CD4-positive, alpha-beta memory T cell (primary cell): ENCODE measurements at regions of chr19 and their contacts with region 1.

Region 1: GRCh38 chr19:1189419-1189818 is 15.4 kb upstream of the SBNO2 start:
- DNase-seq: peak in 2 of 5 donors; percentile 36 to 68
- H3K4me3 ChIP-seq: no peak overlapping the region
- H3K4me3 Mint-ChIP-seq: peak overlapping the region in 6 of 8 donors; percentile 39 to 73 (median 50)
- H3K27ac ChIP-seq: no peak overlapping the region
- H3K27ac Mint-ChIP-seq: peak overlapping the region in 6 of 7 donors; percentile 30 to 92 (median 79)
- H3K4me1 ChIP-seq: peaks cover 39% of the 10 kb centered on the region
- H3K4me1 Mint-ChIP-seq: peaks cover 13 to 30% (median 18%) of the 10 kb centered on the region in 4 donors
- H3K27me3 ChIP-seq: no peaks in the 10 kb centered on the region
- H3K27me3 Mint-ChIP-seq: no peaks in the 10 kb centered on the region

Region 2: DNA sequence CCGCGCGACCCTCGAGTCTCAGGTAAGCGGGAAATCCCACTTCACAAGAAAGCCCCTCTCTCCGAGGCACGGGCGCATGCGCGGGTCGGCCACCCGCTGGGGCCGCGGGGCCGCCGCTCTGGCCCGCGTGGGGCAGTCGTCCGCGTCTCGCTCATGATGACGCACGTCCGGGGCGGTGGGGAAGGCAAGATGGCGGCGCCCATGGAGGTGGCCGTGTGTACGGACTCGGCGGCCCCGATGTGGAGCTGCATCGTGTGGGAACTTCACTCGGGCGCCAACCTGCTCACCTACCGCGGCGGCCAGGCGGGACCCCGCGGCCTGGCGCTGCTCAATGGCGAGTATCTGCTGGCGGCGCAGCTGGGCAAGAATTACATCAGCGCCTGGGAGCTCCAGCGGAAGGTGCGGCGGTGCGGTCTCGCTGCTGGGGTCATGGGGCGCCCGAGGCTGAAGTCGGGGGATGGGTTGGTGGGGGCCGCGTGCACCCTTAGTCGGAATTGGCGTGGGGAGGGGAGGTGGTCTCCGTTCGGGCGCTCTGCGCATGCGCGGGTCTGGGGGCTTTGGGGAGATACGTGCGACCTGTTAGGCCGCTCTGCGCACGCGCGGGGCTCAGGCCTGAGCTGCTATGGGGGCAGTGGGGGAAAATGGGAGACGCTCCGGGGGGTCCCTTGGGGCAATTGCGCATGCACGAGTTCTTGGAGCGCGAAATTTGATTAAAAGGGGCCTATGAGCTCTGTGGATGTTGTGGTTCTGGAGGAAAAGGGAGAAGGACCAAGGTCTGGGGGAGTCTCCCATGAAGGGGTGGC is 205.1 kb before region 1 on chr19 and contains the start of gene WDR18:
- CTCF ChIA-PET with region 1: interaction called, 13 read pairs
- POLR2A ChIA-PET with region 1: interaction called, 6 read pairs
- intact Hi-C with region 1: no loop called
- DNase-seq: peak; percentile 79 to 87 (median 81)
- H3K4me3 ChIP-seq: peak within 1 kb of the TSS; percentile 65 to 69
- H3K4me3 Mint-ChIP-seq: peak within 1 kb of the TSS; percentile 89 to 96 (median 92)
- H3K27ac ChIP-seq: peak within 1 kb of the TSS; percentile 75
- H3K27ac Mint-ChIP-seq: peak within 1 kb of the TSS; percentile 84 to 96 (median 90)
- H3K4me1 ChIP-seq: peaks cover 24% of the 10 kb centered on the region
- H3K4me1 Mint-ChIP-seq: peaks cover 4 to 18% (median 12%) of the 10 kb centered on the region in 4 donors
- H3K27me3 ChIP-seq: no peaks in the 10 kb centered on the region
- H3K27me3 Mint-ChIP-seq: no peaks in the 10 kb centered on the region
- total RNA-seq, gene WDR18: 53.9 to 60.3 TPM

Region 3: DNA sequence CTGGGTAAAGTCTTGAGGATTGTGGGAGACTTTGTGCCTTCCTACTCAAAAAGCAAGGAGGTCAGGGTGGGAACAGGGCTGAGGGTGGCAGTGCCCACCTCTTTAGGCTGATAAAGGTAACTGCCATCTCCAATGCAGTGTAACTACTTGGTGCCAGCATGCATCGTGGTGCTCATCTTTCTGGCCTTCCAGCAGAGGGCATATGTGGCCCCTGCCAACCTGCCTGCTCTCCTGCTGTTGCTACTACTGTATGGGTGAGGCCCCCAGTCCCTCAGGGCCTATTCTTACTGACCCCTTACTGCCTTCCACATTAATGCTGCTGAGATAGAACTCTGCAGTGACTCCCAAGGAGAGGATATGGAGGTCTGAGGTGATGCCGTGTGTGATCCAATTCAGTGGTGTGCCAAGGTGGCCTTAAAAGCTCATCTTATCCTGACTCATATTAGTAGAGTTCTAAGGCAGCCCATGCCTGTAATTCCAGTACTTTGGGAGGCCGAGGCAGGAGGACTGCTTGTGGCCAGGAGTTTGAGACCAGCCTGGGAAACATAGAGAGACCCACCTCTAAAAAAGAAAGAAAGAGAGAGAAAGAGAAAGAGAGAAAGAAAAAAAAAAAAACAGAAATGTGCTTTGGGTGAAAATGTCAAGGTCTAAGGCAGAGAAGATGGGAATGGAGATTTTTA is 132.1 kb before region 1 on chr19:
- CTCF ChIA-PET with region 1: interaction called, 25 read pairs
- POLR2A ChIA-PET with region 1: interaction called, 14 read pairs
- intact Hi-C with region 1: loop called (anchors 1 kb)
- DNase-seq: peak in 4 of 5 donors; percentile 59 to 63 (median 62)
- H3K4me3 ChIP-seq: no peak overlapping the region
- H3K4me3 Mint-ChIP-seq: peak overlapping the region in 5 of 8 donors; percentile 25 to 74 (median 73)
- H3K27ac ChIP-seq: no peak overlapping the region
- H3K27ac Mint-ChIP-seq: peak overlapping the region; percentile 72 to 97 (median 91)
- H3K4me1 ChIP-seq: peaks cover 23% of the 10 kb centered on the region
- H3K4me1 Mint-ChIP-seq: peaks cover 16 to 31% (median 26%) of the 10 kb centered on the region in 4 donors
- H3K27me3 ChIP-seq: no peaks in the 10 kb centered on the region
- H3K27me3 Mint-ChIP-seq: no peaks in the 10 kb centered on the region

Region 4: GRCh38 chr19:1094975-1095701 is 94.3 kb before region 1 on chr19 and contains the start of gene POLR2E:
- CTCF ChIA-PET with region 1: no interaction called
- POLR2A ChIA-PET with region 1: interaction called, 16 read pairs
- intact Hi-C with region 1: loop called (anchors 5 kb)
- DNase-seq: peak; percentile 97 to 99 (median 98)
- H3K4me3 ChIP-seq: peak within 1 kb of the TSS; percentile 54 to 65
- H3K4me3 Mint-ChIP-seq: peak within 1 kb of the TSS; percentile 83 to 96 (median 90)
- H3K27ac ChIP-seq: peak within 1 kb of the TSS; percentile 85
- H3K27ac Mint-ChIP-seq: peak within 1 kb of the TSS; percentile 87 to 97 (median 93)
- H3K4me1 ChIP-seq: peaks cover 44% of the 10 kb centered on the region
- H3K4me1 Mint-ChIP-seq: peaks cover 22 to 75% (median 46%) of the 10 kb centered on the region in 4 donors
- H3K27me3 ChIP-seq: no peaks in the 10 kb centered on the region
- H3K27me3 Mint-ChIP-seq: no peaks in the 10 kb centered on the region
- total RNA-seq, gene POLR2E: 76.0 to 80.0 TPM

Region 5: GRCh38 chr19:1113033-1113985 is 76.1 kb before region 1 on chr19:
- CTCF ChIA-PET with region 1: interaction called, 45 read pairs
- POLR2A ChIA-PET with region 1: interaction called, 26 read pairs
- intact Hi-C with region 1: loop called (anchors 5 kb)
- DNase-seq: peak; percentile 75 to 83 (median 77)
- H3K4me3 ChIP-seq: no peak overlapping the region
- H3K4me3 Mint-ChIP-seq: no peak overlapping the region
- H3K27ac ChIP-seq: peak overlapping the region; percentile 35
- H3K27ac Mint-ChIP-seq: peak overlapping the region in 4 of 7 donors; percentile 24 to 53 (median 42)
- H3K4me1 ChIP-seq: peaks cover 6% of the 10 kb centered on the region
- H3K4me1 Mint-ChIP-seq: no peaks in the 10 kb centered on the region
- H3K27me3 ChIP-seq: no peaks in the 10 kb centered on the region
- H3K27me3 Mint-ChIP-seq: no peaks in the 10 kb centered on the region

Region 6: GRCh38 chr19:1213391-1214286 is 24.2 kb after region 1 on chr19:
- CTCF ChIA-PET with region 1: no interaction called
- POLR2A ChIA-PET with region 1: no interaction called
- intact Hi-C with region 1: no loop called
- DNase-seq: peak; percentile 67 to 87 (median 71)
- H3K4me3 ChIP-seq: peak overlapping the region in 1 of 2 donors; percentile 15
- H3K4me3 Mint-ChIP-seq: peak overlapping the region; percentile 75 to 92 (median 86)
- H3K27ac ChIP-seq: peak overlapping the region; percentile 79
- H3K27ac Mint-ChIP-seq: peak overlapping the region; percentile 94 to 98 (median 97)
- H3K4me1 ChIP-seq: peaks cover 53% of the 10 kb centered on the region
- H3K4me1 Mint-ChIP-seq: peaks cover 20 to 58% (median 29%) of the 10 kb centered on the region in 4 donors
- H3K27me3 ChIP-seq: no peaks in the 10 kb centered on the region
- H3K27me3 Mint-ChIP-seq: no peaks in the 10 kb centered on the region

Region 7: GRCh38 chr19:1241417-1242095 is 52.1 kb after region 1 on chr19 and contains the start of gene ATP5F1D:
- CTCF ChIA-PET with region 1: no interaction called
- POLR2A ChIA-PET with region 1: no interaction called
- intact Hi-C with region 1: loop called (anchors 5 kb)
- DNase-seq: peak; percentile 84 to 88 (median 86)
- H3K4me3 ChIP-seq: peak within 1 kb of the TSS; percentile 29 to 59
- H3K4me3 Mint-ChIP-seq: peak within 1 kb of the TSS; percentile 89 to 95 (median 92)
- H3K27ac ChIP-seq: peak within 1 kb of the TSS; percentile 72
- H3K27ac Mint-ChIP-seq: peak within 1 kb of the TSS; percentile 94 to 99 (median 98)
- H3K4me1 ChIP-seq: peaks cover 59% of the 10 kb centered on the region
- H3K4me1 Mint-ChIP-seq: peaks cover 12 to 52% (median 33%) of the 10 kb centered on the region in 4 donors
- H3K27me3 ChIP-seq: no peaks in the 10 kb centered on the region
- H3K27me3 Mint-ChIP-seq: peaks cover 6 to 10% of the 10 kb centered on the region in 2 donors
- total RNA-seq, gene ATP5F1D: 105 to 108 TPM